ENCODE measurements at regions of chr5 and their contacts with region 1.

Region 1: GRCh38 chr5:6632917-6633468 is at the starts of genes NSUN2 and SRD5A1:
- DNase-seq: peak; percentile 56 to 95
- H3K4me3 ChIP-seq: peak within 1 kb of the TSS; percentile 74 to 87
- H3K27ac ChIP-seq: peak within 1 kb of the TSS; percentile 83 to 97
- H3K4me1 ChIP-seq: peaks cover 0 to 14% of the 10 kb centered on the region in 2 donors
- H3K27me3 ChIP-seq: no peaks in the 10 kb centered on the region
- CTCF ChIP-seq: no peak
- total RNA-seq, gene NSUN2: 19.1 TPM
- total RNA-seq, gene SRD5A1: 186 TPM

Region 2: GRCh38 chr5:6448622-6449464 is 184.2 kb before region 1 on chr5 and contains the start of gene UBE2QL1:
- intact Hi-C with region 1: loop called (anchors 5 kb)
- DNase-seq: no peak
- H3K4me3 ChIP-seq: peak within 1 kb of the TSS; percentile 67 to 72
- H3K27ac ChIP-seq: peak within 1 kb of the TSS in 1 of 2 donors; percentile 40
- H3K4me1 ChIP-seq: peaks cover 0 to 14% of the 10 kb centered on the region in 2 donors
- H3K27me3 ChIP-seq: no peaks in the 10 kb centered on the region
- CTCF ChIP-seq: no peak
- total RNA-seq, gene UBE2QL1: 0.85 TPM

Region 3: DNA sequence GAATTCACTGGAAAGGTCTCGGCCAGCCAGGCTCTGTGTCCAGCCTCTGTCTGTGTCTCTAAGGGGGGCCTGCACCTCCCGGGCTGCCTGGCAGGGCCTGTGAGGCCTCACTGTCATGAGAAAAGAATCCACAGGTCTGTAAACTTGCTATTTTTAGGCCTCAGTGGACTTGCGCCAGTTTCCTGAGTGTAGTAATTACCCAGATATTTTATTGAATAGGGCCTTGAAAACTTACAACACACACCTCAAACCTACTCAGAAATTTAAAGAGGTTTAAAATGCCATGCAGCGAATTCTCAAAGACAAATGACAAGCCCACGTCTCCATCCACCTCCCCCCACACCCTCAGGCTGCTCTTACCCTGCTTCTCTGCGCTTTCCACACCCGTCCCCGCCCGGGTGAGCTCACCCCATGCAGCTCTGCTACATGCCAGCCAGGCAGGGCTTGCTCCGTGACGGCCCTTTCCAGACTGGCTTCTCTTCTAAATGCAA is 71.4 kb after region 1 on chr5:
- intact Hi-C with region 1: loop called (anchors 2 kb)
- DNase-seq: peak; percentile 53 to 94
- H3K4me3 ChIP-seq: peak overlapping the region in 1 of 2 donors; percentile 12
- H3K27ac ChIP-seq: peak overlapping the region; percentile 88 to 89
- H3K4me1 ChIP-seq: peaks cover 14 to 29% of the 10 kb centered on the region in 2 donors
- H3K27me3 ChIP-seq: no peaks in the 10 kb centered on the region
- CTCF ChIP-seq: no peak

Region 4: GRCh38 chr5:6732634-6733410 is 99.8 kb after region 1 on chr5:
- intact Hi-C with region 1: loop called (anchors 5 kb)
- DNase-seq: peak in 1 of 2 donors; percentile 83
- H3K4me3 ChIP-seq: peak overlapping the region; percentile 20 to 44
- H3K27ac ChIP-seq: peak overlapping the region; percentile 81 to 91
- H3K4me1 ChIP-seq: peaks cover 23 to 46% of the 10 kb centered on the region in 2 donors
- H3K27me3 ChIP-seq: no peaks in the 10 kb centered on the region
- CTCF ChIP-seq: no peak

Region 5: GRCh38 chr5:6745706-6746222 is 112.8 kb after region 1 on chr5:
- intact Hi-C with region 1: loop called (anchors 1 kb)
- DNase-seq: peak in 1 of 2 donors; percentile 61
- H3K4me3 ChIP-seq: no peak overlapping the region
- H3K27ac ChIP-seq: peak overlapping the region in 1 of 2 donors; percentile 42
- H3K4me1 ChIP-seq: peaks cover 0 to 3% of the 10 kb centered on the region in 2 donors
- H3K27me3 ChIP-seq: no peaks in the 10 kb centered on the region
- CTCF ChIP-seq: peak; percentile 66 to 77 (median 67)

Measured in ascending aorta (tissue), 2 donors.